ENCODE measurements at regions of chr11 and their contacts with region 1.

Region 1: DNA sequence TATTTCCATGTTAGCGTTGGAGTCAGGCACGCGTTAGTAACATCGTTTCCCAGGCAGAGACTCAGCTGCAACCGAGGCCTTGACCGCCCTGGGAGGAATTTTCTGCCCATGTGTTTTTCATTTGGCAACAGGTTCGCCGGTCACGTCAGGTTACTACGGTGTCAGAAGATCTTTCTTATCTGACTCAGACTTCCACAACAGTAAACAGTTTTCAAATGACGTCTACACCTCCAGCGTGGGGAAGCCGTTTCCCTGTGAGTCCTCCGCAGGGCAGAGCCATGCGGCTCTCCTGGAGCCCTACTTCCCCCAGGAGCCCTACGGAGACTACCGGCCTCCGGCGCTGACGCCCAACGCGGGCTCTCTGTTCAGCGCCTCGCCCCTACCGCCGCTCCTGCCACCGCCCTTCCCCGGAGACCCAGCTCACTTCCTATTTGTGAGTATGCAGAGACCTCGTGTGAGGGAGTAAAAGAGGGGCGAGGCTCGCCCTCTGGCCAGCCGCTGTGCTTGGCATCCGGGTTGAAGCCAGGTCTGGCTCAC is 14.3 kb upstream of the POU2AF3 start:
- DNase-seq: peak in 2 of 10 donors; percentile 70 to 84

Region 2: GRCh38 chr11:111237926-111238325 is 46.1 kb before region 1 on chr11:
- intact Hi-C with region 1: loop called (anchors 2 kb)
- DNase-seq: no peak

Region 3: GRCh38 chr11:111422494-111423249 is 138.7 kb after region 1 on chr11:
- intact Hi-C with region 1: loop called (anchors 1 kb)
- DNase-seq: peak in 8 of 10 donors; percentile 24 to 93 (median 62)

Region 4: GRCh38 chr11:111446404-111447111 is 162.5 kb after region 1 on chr11:
- intact Hi-C with region 1: loop called (anchors 1 kb)
- DNase-seq: peak; percentile 56 to 96 (median 80)

Measured in posterior cingulate gyrus (tissue), 11 donors.